Heart left ventricle (tissue), 16 donors: ENCODE measurements at regions of chr18 and their contacts with region 1.

Region 1: GRCh38 chr18:33404244-33404873 is 36.2 kb downstream of the CCDC178 start:
- DNase-seq: no peak
- ATAC-seq: no peak
- H3K4me3 ChIP-seq: no peak overlapping the region
- H3K27ac ChIP-seq: no peak overlapping the region
- H3K4me1 ChIP-seq: no peaks in the 10 kb centered on the region
- H3K27me3 ChIP-seq: no peaks in the 10 kb centered on the region
- CTCF ChIP-seq: peak in 6 of 12 donors; percentile 9 to 45 (median 30)
- POLR2A ChIP-seq: no peak

Region 2: GRCh38 chr18:33282709-33283333 is 121.5 kb before region 1 on chr18:
- intact Hi-C with region 1: no loop called
- DNase-seq: peak in 1 of 5 donors; percentile 45
- ATAC-seq: no peak
- H3K4me3 ChIP-seq: no peak overlapping the region
- H3K27ac ChIP-seq: no peak overlapping the region
- H3K4me1 ChIP-seq: no peaks in the 10 kb centered on the region
- H3K27me3 ChIP-seq: no peaks in the 10 kb centered on the region
- CTCF ChIP-seq: no peak
- POLR2A ChIP-seq: no peak

Region 3: GRCh38 chr18:33350256-33350655 is 54.1 kb before region 1 on chr18:
- intact Hi-C with region 1: loop called in 1 of 10 experiments (anchors 10 kb)
- DNase-seq: no peak
- ATAC-seq: no peak
- H3K4me3 ChIP-seq: no peak overlapping the region
- H3K27ac ChIP-seq: no peak overlapping the region
- H3K4me1 ChIP-seq: no peaks in the 10 kb centered on the region
- H3K27me3 ChIP-seq: no peaks in the 10 kb centered on the region
- CTCF ChIP-seq: no peak
- POLR2A ChIP-seq: no peak

Region 4: GRCh38 chr18:33459612-33460011 is 55.3 kb after region 1 on chr18:
- intact Hi-C with region 1: loop called in 1 of 10 experiments (anchors 10 kb)
- DNase-seq: no peak
- ATAC-seq: no peak
- H3K4me3 ChIP-seq: no peak overlapping the region
- H3K27ac ChIP-seq: no peak overlapping the region
- H3K4me1 ChIP-seq: no peaks in the 10 kb centered on the region
- H3K27me3 ChIP-seq: no peaks in the 10 kb centered on the region
- CTCF ChIP-seq: no peak
- POLR2A ChIP-seq: no peak

Region 5: DNA sequence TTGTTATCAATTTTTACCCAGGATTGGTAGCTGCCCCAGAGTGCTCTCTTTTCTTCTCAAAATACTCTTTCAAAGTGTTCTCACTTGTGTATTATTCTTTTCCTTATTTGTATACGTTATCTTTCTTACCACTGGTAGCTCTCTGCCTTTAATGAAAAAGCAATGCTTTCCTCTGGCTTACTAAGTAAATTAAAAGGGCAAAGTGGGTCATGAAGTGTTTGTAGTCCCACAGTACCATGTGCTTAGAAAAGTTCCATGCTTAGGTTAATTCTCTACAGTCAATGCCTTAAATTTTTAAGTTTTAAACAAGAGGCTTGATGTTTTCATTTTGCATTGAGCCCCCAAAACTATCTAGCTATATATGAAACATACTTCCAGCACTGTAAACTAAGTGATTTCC is 473.9 kb after region 1 on chr18:
- intact Hi-C with region 1: no loop called
- DNase-seq: no peak
- ATAC-seq: no peak
- H3K4me3 ChIP-seq: no peak overlapping the region
- H3K27ac ChIP-seq: no peak overlapping the region
- H3K4me1 ChIP-seq: no peaks in the 10 kb centered on the region
- H3K27me3 ChIP-seq: no peaks in the 10 kb centered on the region
- CTCF ChIP-seq: no peak
- POLR2A ChIP-seq: no peak